OCI-LY7 (cell line): ENCODE measurements at regions of chr5 and their contacts with region 1.

Region 1: DNA sequence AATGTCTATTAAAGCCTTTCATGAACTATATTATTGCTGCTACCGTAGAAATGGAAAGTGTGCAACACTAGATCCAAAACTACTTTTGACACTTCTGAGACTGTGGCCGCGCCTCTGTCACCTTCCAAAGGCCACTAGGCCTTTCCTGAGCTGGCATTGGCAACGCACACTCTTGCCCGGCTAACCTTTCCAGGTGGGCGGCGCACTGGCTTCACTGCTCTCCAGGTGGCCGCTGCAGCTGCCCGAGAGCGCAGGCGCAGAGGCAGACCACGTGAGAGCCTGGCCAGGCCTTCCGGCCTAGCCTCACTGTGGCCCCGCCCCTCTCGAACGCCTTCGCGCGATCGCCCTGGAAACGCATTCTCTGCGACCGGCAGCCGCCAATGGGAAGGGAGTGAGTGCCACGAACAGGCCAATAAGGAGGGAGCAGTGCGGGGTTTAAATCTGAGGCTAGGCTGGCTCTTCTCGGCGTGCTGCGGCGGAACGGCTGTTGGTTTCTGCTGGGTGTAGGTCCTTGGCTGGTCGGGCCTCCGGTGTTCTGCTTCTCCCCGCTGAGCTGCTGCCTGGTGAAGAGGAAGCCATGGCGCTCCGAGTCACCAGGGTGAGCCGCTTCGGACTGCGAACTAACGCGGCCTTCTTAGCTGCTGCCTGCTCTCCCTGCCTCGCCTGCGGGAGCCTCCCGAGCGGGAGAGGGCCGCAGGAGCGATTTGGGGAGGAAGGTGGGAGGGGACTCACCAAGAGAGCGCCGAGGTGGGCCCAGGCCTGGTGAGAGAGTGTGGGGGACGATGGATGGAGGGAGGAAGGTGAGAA is at the start of gene CCNB1:
- DNase-seq: peak; percentile 99
- H3K4me3 ChIP-seq: peak within 1 kb of the TSS; percentile 90
- H3K27ac ChIP-seq: peak within 1 kb of the TSS; percentile 85
- H3K4me1 ChIP-seq: peaks cover 41% of the 10 kb centered on the region
- CTCF ChIP-seq: no peak; the same call in 1 of the 2 replicates
- total RNA-seq, gene CCNB1: 181 and 206 TPM in 2 replicates

Region 2: DNA sequence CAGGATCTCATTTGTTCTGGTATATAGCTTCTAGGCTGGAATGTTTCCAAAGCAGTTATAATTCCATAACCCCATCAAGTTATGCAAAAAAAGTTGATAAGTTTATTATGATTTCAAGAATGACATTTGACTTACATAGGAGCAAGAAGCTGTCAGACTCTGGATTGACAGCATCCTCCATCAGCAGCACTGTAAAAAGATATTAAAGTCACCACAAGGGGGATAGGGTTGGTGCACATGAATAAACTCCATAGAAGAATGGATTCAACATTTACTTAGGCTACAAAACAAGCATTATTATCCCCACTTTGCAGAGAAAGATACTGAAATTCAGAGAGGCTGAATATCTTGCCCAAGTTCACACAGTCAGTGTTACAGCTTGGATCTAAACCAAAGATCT is 282.0 kb before region 1 on chr5:
- CTCF ChIA-PET with region 1: no interaction called
- POLR2A ChIA-PET with region 1: no interaction called
- intact Hi-C with region 1: no loop called
- DNase-seq: no peak
- H3K4me3 ChIP-seq: no peak overlapping the region
- H3K27ac ChIP-seq: no peak overlapping the region
- H3K4me1 ChIP-seq: no peaks in the 10 kb centered on the region
- CTCF ChIP-seq: peak; percentile 47; the same call in 1 of the 2 replicates

Region 3: DNA sequence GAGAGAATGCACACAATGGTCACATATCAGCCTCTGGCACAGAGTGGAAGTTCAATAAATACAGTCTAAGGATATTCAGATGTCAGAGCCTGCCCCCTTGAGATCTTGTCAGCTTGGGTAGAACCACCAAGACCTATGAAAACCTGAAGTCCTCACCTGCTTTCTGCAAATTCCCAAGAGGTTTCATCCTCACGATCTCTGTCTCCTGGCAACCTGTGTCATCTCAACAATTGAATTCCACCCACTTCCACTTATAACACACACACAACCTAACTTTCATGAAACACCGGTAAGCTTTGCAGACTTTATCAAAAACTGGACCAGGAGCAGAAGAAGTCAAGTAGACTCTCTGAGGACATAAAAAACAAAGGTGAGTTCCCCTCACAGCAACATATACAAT is 224.7 kb before region 1 on chr5:
- CTCF ChIA-PET with region 1: no interaction called
- POLR2A ChIA-PET with region 1: no interaction called
- intact Hi-C with region 1: no loop called
- DNase-seq: no peak
- H3K4me3 ChIP-seq: no peak overlapping the region
- H3K27ac ChIP-seq: no peak overlapping the region
- H3K4me1 ChIP-seq: no peaks in the 10 kb centered on the region
- CTCF ChIP-seq: no peak

Region 4: GRCh38 chr5:69093771-69094482 is 73.0 kb before region 1 on chr5 and contains the start of gene SLC30A5:
- CTCF ChIA-PET with region 1: no interaction called
- POLR2A ChIA-PET with region 1: no interaction called
- intact Hi-C with region 1: loop called (anchors 5 kb)
- DNase-seq: peak; percentile 100
- H3K4me3 ChIP-seq: peak within 1 kb of the TSS; percentile 87
- H3K27ac ChIP-seq: peak within 1 kb of the TSS; percentile 53
- H3K4me1 ChIP-seq: peaks cover 14% of the 10 kb centered on the region
- CTCF ChIP-seq: peak; percentile 84
- total RNA-seq, gene SLC30A5: 30.2 and 47.5 TPM in 2 replicates

Region 5: GRCh38 chr5:69189162-69190086 is 22.5 kb after region 1 on chr5 and contains the start of gene CENPH:
- CTCF ChIA-PET with region 1: interaction called, 3 read pairs
- POLR2A ChIA-PET with region 1: interaction called, 35 read pairs
- intact Hi-C with region 1: loop called (anchors 1 kb)
- DNase-seq: peak; percentile 92
- H3K4me3 ChIP-seq: peak within 1 kb of the TSS; percentile 88
- H3K27ac ChIP-seq: peak within 1 kb of the TSS; percentile 78
- H3K4me1 ChIP-seq: peaks cover 15% of the 10 kb centered on the region
- CTCF ChIP-seq: no peak
- total RNA-seq, gene CENPH: 85.7 and 86.1 TPM in 2 replicates

Region 6: GRCh38 chr5:69334793-69335268 is 167.9 kb after region 1 on chr5:
- CTCF ChIA-PET with region 1: no interaction called
- POLR2A ChIA-PET with region 1: no interaction called
- intact Hi-C with region 1: loop called (anchors 5 kb)
- DNase-seq: peak; percentile 82
- H3K4me3 ChIP-seq: no peak overlapping the region
- H3K27ac ChIP-seq: no peak overlapping the region
- H3K4me1 ChIP-seq: peaks cover 16% of the 10 kb centered on the region
- CTCF ChIP-seq: peak; percentile 80

Region 7: GRCh38 chr5:69369369-69370121 is 202.7 kb after region 1 on chr5 and contains the starts of genes AK6, RAD17 and TAF9:
- CTCF ChIA-PET with region 1: no interaction called
- POLR2A ChIA-PET with region 1: interaction called, 7 read pairs
- intact Hi-C with region 1: loop called (anchors 5 kb)
- DNase-seq: peak; percentile 96
- H3K4me3 ChIP-seq: peak within 1 kb of the TSS; percentile 84
- H3K27ac ChIP-seq: peak within 1 kb of the TSS; percentile 88
- H3K4me1 ChIP-seq: peaks cover 54% of the 10 kb centered on the region
- CTCF ChIP-seq: no peak
- total RNA-seq, gene AK6: 54.9 and 91.8 TPM in 2 replicates
- total RNA-seq, gene RAD17: 41.6 and 64.1 TPM in 2 replicates
- total RNA-seq, gene TAF9: 113 TPM in 2 replicates